HEK293 (cell line): ENCODE measurements at regions of chr17 and their contacts with region 1.

Region 1: GRCh38 chr17:3683054-3683511 is 12.9 kb downstream of the P2RX5 start:
- H3K4me3 ChIP-seq: no peak overlapping the region
- H3K27ac ChIP-seq: no peak overlapping the region
- H3K4me1 ChIP-seq: no peaks in the 10 kb centered on the region
- CTCF ChIP-seq: peak; percentile 88

Region 2: GRCh38 chr17:3502466-3502865 is 180.6 kb before region 1 on chr17:
- CTCF ChIA-PET with region 1: no interaction called
- POLR2A ChIA-PET with region 1: no interaction called
- H3K4me3 ChIP-seq: no peak overlapping the region
- H3K27ac ChIP-seq: no peak overlapping the region
- H3K4me1 ChIP-seq: no peaks in the 10 kb centered on the region
- CTCF ChIP-seq: no peak

Region 3: GRCh38 chr17:3723556-3724369 is 40.7 kb after region 1 on chr17 and contains the start of gene HASPIN:
- CTCF ChIA-PET with region 1: interaction called, 17 read pairs
- POLR2A ChIA-PET with region 1: interaction called, 3 read pairs
- H3K4me3 ChIP-seq: peak within 1 kb of the TSS; percentile 94
- H3K27ac ChIP-seq: peak within 1 kb of the TSS; percentile 78
- H3K4me1 ChIP-seq: peaks cover 6% of the 10 kb centered on the region
- CTCF ChIP-seq: peak; percentile 81

Region 4: GRCh38 chr17:3732210-3732621 is 49.1 kb after region 1 on chr17:
- CTCF ChIA-PET with region 1: interaction called, 19 read pairs
- POLR2A ChIA-PET with region 1: interaction called, 3 read pairs
- H3K4me3 ChIP-seq: no peak overlapping the region
- H3K27ac ChIP-seq: no peak overlapping the region
- H3K4me1 ChIP-seq: no peaks in the 10 kb centered on the region
- CTCF ChIP-seq: no peak